CD8-positive, alpha-beta memory T cell (primary cell): ENCODE measurements at regions of chr3 and their contacts with region 1.

Region 1: DNA sequence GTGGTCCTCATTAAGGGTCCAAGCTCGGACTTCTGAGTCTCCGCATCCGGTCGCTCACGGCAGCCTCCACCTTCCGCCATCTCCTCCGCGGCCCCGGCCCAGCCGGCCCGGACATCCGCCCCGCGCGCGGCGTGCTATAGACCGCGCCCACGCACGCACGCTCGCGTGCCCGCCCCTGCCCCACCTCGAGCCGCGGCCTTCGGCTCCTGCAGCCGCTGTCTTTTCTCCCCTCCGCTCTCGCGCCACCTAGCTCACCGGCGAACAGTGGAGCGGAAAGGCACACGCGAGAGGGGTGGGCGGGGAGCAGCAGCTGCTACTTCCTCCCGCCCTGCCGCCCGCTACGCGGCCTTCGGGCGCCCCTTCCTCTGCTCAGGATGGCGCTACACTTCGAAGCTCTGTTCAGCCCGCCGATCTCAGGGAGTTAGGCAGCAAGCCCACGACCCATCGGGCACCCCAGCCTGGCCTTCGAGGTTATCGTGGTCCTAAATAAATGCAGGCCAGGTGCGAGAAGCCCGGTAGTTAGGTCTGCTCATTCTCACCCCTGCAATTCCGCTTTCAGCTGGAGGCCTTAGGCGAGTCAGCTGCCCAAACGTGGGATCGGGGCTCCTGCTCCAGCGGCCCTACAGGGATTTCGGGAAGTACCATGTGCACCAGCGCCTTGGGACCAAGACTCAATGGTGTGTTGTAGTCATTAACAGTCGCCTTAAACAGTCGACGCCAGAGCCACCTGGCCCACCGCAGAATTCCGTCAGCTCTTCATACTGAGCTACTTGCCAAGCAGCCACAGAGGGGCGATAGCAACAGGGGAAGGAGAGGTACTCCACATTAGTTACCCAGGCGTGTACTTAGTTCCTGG is at the start of gene USP4:
- DNase-seq: peak; percentile 82 to 95 (median 90)
- H3K4me3 ChIP-seq: peak within 1 kb of the TSS; percentile 84
- H3K4me3 Mint-ChIP-seq: peak within 1 kb of the TSS; percentile 88 to 96 (median 95)
- H3K27ac ChIP-seq: peak within 1 kb of the TSS; percentile 98
- H3K27ac Mint-ChIP-seq: peak within 1 kb of the TSS; percentile 95 to 100 (median 97)
- H3K4me1 ChIP-seq: peaks cover 41% of the 10 kb centered on the region
- H3K4me1 Mint-ChIP-seq: peaks cover 38 to 54% (median 41%) of the 10 kb centered on the region in 3 donors
- H3K27me3 ChIP-seq: no peaks in the 10 kb centered on the region
- H3K27me3 Mint-ChIP-seq: peaks cover 0 to 1% of the 10 kb centered on the region in 2 donors
- total RNA-seq, gene USP4: 72.6 to 73.0 TPM

Region 2: DNA sequence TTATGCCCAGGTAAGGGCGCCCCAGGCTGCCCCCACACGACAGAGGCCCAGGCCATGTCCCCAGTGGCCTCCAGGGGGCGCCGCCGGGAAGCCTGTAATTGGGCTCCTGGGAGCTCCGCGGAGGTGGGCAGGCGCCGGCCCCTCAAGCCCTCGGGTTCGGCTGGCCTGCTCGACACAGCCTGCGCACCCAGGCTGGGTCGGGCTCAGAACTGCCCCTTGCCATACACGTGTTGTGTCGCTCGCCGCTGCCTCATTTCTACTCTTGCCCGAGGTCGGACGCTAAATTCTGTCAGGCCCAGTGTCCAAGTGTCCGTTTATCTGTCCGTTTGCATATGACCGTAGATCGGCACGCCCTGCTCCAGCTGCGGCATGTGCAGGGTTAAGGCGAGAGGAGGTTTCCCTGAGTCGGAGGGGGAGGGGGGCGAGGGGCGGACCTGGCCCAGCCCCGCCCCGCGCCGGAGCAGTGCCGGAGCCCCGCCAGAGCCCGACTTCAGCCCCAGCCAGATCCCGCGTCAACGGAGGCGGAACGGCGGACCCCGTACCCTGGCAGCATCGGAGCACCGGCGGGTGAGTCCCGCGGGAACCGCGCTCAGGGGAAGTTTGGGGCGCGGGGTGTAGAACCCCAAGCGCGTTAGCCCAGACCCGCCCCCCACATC is 168.9 kb before region 1 on chr3 and contains the start of gene KLHDC8B:
- CTCF ChIA-PET with region 1: interaction called, 9 read pairs
- POLR2A ChIA-PET with region 1: interaction called, 11 read pairs
- DNase-seq: peak; percentile 75 to 87 (median 79)
- H3K4me3 ChIP-seq: peak within 1 kb of the TSS; percentile 68
- H3K4me3 Mint-ChIP-seq: peak within 1 kb of the TSS; percentile 84 to 94 (median 87)
- H3K27ac ChIP-seq: peak within 1 kb of the TSS; percentile 58
- H3K27ac Mint-ChIP-seq: peak within 1 kb of the TSS in 7 of 8 donors; percentile 3 to 92 (median 84)
- H3K4me1 ChIP-seq: peaks cover 28% of the 10 kb centered on the region
- H3K4me1 Mint-ChIP-seq: peaks cover 15 to 25% (median 15%) of the 10 kb centered on the region in 3 donors
- H3K27me3 ChIP-seq: no peaks in the 10 kb centered on the region
- H3K27me3 Mint-ChIP-seq: peaks cover 0 to 5% of the 10 kb centered on the region in 2 donors
- total RNA-seq, gene KLHDC8B: 3.5 to 4.1 TPM

Region 3: DNA sequence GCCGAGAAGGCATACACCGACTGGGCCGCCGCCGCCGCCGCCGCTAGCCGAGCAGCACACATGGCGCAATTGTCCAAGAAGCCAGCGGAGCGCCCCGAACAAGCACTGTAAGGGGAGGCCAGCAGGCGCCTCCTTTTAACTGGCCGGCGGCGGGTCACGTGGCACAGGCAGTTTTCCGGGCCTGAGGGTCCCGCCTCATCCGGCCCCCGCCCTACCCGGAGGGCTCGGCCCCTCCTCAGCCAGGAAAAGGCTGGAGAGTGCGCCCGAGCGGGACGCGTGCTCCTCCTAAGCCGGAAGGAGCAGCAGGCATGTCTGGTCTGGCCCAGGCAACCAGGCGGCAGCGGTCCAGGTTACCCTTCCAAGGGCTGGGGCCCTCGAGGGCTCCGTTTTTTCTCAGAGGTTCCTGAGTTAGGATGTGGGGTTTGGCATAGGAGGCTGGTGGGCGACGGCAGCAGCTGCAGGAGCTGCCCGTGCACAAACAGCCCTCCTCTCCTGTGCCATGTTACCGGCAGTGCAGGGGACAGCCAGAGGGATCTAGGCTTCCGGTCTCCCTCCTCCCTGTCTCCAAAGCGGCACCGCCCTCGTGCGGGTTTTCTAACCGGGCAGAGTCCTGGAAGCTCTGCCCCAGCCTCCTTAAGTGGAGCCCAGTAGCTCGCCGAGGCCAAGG is 18.2 kb after region 1 on chr3 and contains the start of gene GPX1:
- CTCF ChIA-PET with region 1: interaction called, 21 read pairs
- POLR2A ChIA-PET with region 1: interaction called, 19 read pairs
- DNase-seq: peak; percentile 68 to 84 (median 75)
- H3K4me3 ChIP-seq: peak within 1 kb of the TSS; percentile 87
- H3K4me3 Mint-ChIP-seq: peak within 1 kb of the TSS; percentile 89 to 99 (median 93)
- H3K27ac ChIP-seq: peak within 1 kb of the TSS; percentile 59
- H3K27ac Mint-ChIP-seq: peak within 1 kb of the TSS; percentile 91 to 99 (median 94)
- H3K4me1 ChIP-seq: peaks cover 17% of the 10 kb centered on the region
- H3K4me1 Mint-ChIP-seq: peaks cover 17 to 33% (median 19%) of the 10 kb centered on the region in 3 donors
- H3K27me3 ChIP-seq: no peaks in the 10 kb centered on the region
- H3K27me3 Mint-ChIP-seq: no peaks in the 10 kb centered on the region
- total RNA-seq, gene GPX1: 223 to 231 TPM

Region 4: DNA sequence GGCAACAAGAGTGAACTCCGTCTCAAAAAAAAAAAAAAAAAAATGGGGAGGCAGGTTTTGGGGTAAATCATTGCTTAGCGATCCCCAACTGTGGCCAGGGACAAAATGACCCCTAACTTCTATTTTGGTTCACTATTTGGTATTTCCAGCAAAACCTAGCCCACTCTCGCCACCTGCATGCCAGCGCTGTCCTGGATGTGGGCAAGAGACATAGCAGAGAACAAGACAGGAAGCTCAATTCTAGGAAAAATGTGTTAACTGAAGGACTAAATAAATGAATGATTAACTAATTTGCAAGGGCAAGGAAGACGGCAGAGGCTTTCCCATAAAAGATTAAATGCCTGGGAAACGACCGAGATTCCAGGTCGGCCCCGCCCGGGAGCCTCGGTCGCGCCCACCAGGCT is 88.5 kb after region 1 on chr3:
- CTCF ChIA-PET with region 1: interaction called, 13 read pairs
- POLR2A ChIA-PET with region 1: interaction called, 40 read pairs
- DNase-seq: no peak
- H3K4me3 ChIP-seq: peak overlapping the region; percentile 83
- H3K4me3 Mint-ChIP-seq: peak overlapping the region; percentile 89 to 99 (median 96)
- H3K27ac ChIP-seq: peak overlapping the region; percentile 87
- H3K27ac Mint-ChIP-seq: peak overlapping the region in 7 of 8 donors; percentile 59 to 98 (median 95)
- H3K4me1 ChIP-seq: peaks cover 4% of the 10 kb centered on the region
- H3K4me1 Mint-ChIP-seq: peaks cover 14 to 32% (median 28%) of the 10 kb centered on the region in 3 donors
- H3K27me3 ChIP-seq: no peaks in the 10 kb centered on the region
- H3K27me3 Mint-ChIP-seq: no peaks in the 10 kb centered on the region

Region 5: GRCh38 chr3:49454458-49454857 is 114.3 kb after region 1 on chr3:
- CTCF ChIA-PET with region 1: interaction called, 69 read pairs
- POLR2A ChIA-PET with region 1: interaction called, 16 read pairs
- DNase-seq: no peak
- H3K4me3 ChIP-seq: no peak overlapping the region
- H3K4me3 Mint-ChIP-seq: no peak overlapping the region
- H3K27ac ChIP-seq: no peak overlapping the region
- H3K27ac Mint-ChIP-seq: peak overlapping the region in 3 of 8 donors; percentile 2 to 79 (median 61)
- H3K4me1 ChIP-seq: no peaks in the 10 kb centered on the region
- H3K4me1 Mint-ChIP-seq: no peaks in the 10 kb centered on the region
- H3K27me3 ChIP-seq: no peaks in the 10 kb centered on the region
- H3K27me3 Mint-ChIP-seq: no peaks in the 10 kb centered on the region